ENCODE measurements at regions of chr5 and their contacts with region 1.

Region 1: DNA sequence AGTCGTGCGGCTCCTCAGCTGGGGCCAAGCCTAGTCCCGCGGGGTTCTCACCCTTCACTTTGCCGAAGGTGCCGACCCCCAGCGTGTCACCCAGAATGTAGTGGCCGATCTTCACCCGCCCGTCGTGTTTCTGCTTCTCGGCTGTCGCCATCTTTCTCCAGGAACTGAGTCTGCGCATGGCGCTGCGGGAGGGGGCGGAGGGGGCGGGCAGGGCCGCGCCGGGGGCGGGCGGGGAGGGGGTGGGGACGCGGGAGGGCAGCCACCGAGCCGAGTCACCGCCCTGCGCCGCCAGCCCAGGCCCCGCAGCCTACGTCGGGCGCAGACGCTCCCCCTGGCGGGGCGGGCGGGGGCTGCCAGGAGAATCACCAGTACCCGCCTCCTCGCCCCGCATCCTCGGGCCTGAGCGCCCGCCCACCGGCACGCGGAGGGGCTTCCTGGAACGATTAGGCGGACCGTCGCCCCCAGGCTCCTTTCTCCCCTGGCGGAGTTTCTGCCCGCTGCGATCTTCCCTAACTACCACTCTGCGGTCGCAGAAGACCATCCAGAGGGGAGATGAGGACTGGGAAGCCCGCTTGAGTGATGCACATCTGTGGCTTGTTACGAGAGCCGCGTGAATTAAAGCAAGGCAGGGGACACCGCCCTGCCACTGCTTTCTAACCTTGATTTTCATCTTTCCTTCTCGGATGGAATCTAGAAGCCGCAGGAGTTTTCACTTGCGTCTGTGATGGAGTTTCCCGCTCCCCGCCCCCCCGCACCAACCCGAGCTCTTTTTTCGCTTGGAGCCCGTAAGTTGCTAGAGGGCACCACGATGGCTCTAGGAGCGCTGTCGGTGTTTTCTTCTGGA is at the start of gene PRKAA1:
- DNase-seq: peak; percentile 93
- ATAC-seq: peak; percentile 94
- H3K4me3 Mint-ChIP-seq: peak within 1 kb of the TSS; percentile 82
- H3K27ac Mint-ChIP-seq: peak within 1 kb of the TSS; percentile 78
- H3K4me1 Mint-ChIP-seq: peaks cover 35% of the 10 kb centered on the region
- H3K27me3 Mint-ChIP-seq: peaks cover 2% of the 10 kb centered on the region
- total RNA-seq, gene PRKAA1: 46.9 to 63.9 TPM

Region 2: DNA sequence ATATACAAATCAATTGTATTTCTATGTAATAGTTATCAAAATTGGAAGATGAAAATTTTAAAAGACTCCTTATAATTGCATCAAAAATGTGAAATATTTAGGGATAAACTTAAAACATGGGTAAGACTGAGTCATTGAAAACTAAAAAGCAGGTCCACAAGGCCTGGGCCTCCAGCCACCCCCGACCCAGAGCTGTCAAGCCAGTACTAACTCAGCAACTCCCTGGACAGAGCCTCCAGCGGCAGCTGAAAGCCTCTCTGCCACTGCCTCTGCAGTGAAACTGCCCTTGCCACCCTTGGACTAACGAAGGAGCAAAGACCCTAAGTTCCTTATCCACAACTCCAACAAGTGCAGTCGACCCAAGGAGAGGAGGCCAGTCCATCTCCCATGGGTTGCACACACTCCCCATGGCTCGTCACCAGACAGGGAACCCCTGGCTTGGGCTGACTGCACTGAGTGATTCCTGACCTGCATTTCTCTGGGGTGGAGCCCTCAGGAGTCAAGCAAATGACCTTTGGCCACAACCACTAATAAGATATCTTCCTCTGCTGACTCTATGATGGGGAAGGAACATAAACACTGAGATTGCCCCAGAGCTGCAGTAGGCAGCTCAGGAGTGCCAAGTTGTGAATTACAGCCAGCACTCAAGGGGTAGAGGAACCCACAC is 98.0 kb before region 1 on chr5:
- CTCF ChIA-PET with region 1: no interaction called
- POLR2A ChIA-PET with region 1: no interaction called
- intact Hi-C with region 1: no loop called
- DNase-seq: no peak
- ATAC-seq: no peak
- H3K4me3 Mint-ChIP-seq: no peak overlapping the region
- H3K27ac Mint-ChIP-seq: no peak overlapping the region
- H3K4me1 Mint-ChIP-seq: no peaks in the 10 kb centered on the region
- H3K27me3 Mint-ChIP-seq: no peaks in the 10 kb centered on the region

Region 3: DNA sequence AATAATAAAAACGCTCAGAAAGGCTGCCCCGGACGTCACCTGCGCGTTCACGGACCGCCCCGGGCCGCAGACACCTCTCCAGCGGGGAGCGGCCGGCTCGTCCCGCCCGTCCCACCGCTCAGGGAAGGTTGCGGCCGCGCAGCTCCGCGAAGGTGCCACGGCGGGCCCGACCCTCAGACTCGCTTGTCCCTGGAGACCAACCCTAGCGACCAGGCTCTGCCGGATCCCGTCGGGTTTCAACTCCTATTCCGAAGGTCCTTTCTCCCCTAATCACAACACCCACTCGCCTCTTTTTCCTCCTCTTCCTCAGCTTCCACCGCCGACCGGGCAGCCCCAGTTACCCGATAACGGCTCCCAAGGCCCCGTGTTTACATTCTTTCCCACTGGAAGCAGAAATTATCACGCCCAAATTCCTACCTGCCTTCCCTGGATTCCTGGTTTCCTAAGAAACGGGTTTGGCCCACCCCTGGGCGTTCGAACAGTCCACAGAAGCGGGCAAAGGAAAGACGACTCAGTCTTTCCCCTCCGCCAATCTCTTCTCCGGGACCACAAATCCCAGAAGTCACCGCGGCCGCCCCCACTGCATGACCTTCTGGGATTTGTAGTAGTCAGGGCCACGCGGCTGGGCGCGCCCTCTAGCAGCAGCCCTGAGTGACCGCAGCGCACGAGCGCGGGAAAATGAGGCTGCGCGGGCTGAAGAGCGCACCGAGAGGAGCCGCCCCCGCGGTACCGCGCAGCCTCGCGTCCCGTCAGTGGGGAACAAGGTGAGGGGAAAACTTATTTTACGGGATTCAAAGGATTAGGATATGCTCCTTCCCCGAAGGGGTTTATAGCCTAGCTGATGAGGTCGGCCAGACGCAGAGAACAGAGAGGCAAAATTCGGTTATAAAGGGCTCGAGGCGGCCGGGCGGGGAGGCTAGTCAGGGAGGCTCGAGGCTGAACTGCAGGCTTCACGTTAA is 42.5 kb before region 1 on chr5 and contains the start of gene TTC33:
- CTCF ChIA-PET with region 1: interaction called, 6 read pairs
- POLR2A ChIA-PET with region 1: no interaction called
- intact Hi-C with region 1: loop called (anchors 1 kb)
- DNase-seq: peak; percentile 99
- ATAC-seq: peak; percentile 90
- H3K4me3 Mint-ChIP-seq: no peak within 1 kb of the TSS
- H3K27ac Mint-ChIP-seq: no peak within 1 kb of the TSS
- H3K4me1 Mint-ChIP-seq: peaks cover 21% of the 10 kb centered on the region
- H3K27me3 Mint-ChIP-seq: no peaks in the 10 kb centered on the region
- total RNA-seq, gene TTC33: 31.4 to 31.7 TPM

Region 4: GRCh38 chr5:40813698-40814281 is 15.6 kb after region 1 on chr5:
- CTCF ChIA-PET with region 1: interaction called, 5 read pairs
- POLR2A ChIA-PET with region 1: no interaction called
- intact Hi-C with region 1: loop called in 1 of 2 experiments (anchors 1 kb)
- DNase-seq: peak; percentile 77
- ATAC-seq: peak; percentile 97
- H3K4me3 Mint-ChIP-seq: no peak overlapping the region
- H3K27ac Mint-ChIP-seq: peak overlapping the region; percentile 26
- H3K4me1 Mint-ChIP-seq: peaks cover 10% of the 10 kb centered on the region
- H3K27me3 Mint-ChIP-seq: no peaks in the 10 kb centered on the region